GM12878 (cell line): ENCODE measurements at regions of chr5 and their contacts with region 1.

Region 1: DNA sequence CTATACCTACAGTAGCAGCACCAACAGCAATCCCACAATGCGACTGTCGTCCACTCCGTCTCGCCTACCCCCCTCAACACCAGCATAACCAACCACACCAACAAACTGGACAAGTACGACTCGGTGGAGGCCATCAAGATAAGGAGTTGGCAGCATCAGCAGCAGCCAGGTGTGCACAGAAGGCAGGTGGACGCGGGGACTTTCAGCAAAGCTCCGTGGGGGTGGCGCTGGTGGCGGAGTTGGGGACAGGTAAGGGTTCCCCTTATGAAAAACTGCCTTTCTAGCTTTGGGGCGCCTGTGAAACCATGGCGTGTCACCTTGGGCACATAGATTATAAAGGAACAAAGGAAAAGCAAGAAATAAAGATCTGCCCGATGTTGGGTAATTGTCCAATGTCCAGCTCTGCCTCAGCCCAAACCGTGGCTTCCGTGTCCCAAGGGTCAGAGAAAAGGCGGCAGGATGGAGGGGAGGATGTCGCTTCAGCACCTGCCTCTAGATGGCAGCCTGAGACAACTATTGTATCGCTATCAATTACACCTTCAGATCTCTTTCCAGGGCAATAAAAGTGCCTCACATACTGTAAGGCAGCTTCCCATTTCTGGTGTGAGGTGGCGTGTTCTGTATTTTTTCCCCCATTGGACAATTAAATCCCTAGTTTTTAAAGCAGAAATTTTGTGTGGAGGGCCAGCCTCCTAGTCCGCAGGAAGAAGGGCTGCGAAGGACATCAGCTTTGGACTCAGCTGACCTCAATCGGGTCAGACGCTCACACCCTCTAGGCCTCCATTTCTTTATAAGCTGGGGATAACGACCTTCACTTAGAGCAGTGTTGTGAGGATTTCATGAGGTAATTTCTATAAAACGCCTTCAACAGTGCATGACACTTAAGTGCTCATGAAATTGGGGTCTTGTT is 58.8 kb downstream of the MTRR start:
- DNase-seq: no peak
- ATAC-seq: peak; percentile 96
- H3K4me3 ChIP-seq: no peak overlapping the region
- H3K27ac ChIP-seq: no peak overlapping the region
- H3K4me1 ChIP-seq: no peaks in the 10 kb centered on the region
- H3K27me3 ChIP-seq: no peaks in the 10 kb centered on the region; a peak in 1 of 4 replicates
- CTCF ChIP-seq: peak; percentile 74 to 81 (median 77); a peak in 5 of 6 replicates
- EP300 ChIP-seq: no peak
- POLR2A ChIP-seq: no peak
- RAD21 ChIP-seq: peak; percentile 83

Region 2: GRCh38 chr5:7941692-7942091 is 14.0 kb after region 1 on chr5:
- CTCF ChIA-PET with region 1: interaction called, 15 read pairs
- POLR2A ChIA-PET with region 1: no interaction called
- RAD21 ChIA-PET with region 1: interaction called, 3 read pairs
- SMC1A ChIA-PET with region 1: interaction called, 4 read pairs
- in situ Hi-C with region 1: no loop called
- intact Hi-C with region 1: no loop called
- DNase-seq: no peak
- ATAC-seq: no peak
- H3K4me3 ChIP-seq: no peak overlapping the region
- H3K27ac ChIP-seq: no peak overlapping the region
- H3K4me1 ChIP-seq: no peaks in the 10 kb centered on the region
- H3K27me3 ChIP-seq: no peaks in the 10 kb centered on the region
- CTCF ChIP-seq: no peak
- EP300 ChIP-seq: no peak
- POLR2A ChIP-seq: no peak
- RAD21 ChIP-seq: no peak

Region 3: GRCh38 chr5:8184455-8185063 is 256.8 kb after region 1 on chr5:
- CTCF ChIA-PET with region 1: interaction called, 5 read pairs
- POLR2A ChIA-PET with region 1: no interaction called
- RAD21 ChIA-PET with region 1: no interaction called
- SMC1A ChIA-PET with region 1: no interaction called
- in situ Hi-C with region 1: no loop called
- intact Hi-C with region 1: loop called (anchors 5 kb)
- DNase-seq: no peak
- ATAC-seq: peak; percentile 86
- H3K4me3 ChIP-seq: no peak overlapping the region
- H3K27ac ChIP-seq: no peak overlapping the region
- H3K4me1 ChIP-seq: no peaks in the 10 kb centered on the region
- H3K27me3 ChIP-seq: no peaks in the 10 kb centered on the region
- CTCF ChIP-seq: peak; percentile 73 to 95 (median 91)
- EP300 ChIP-seq: no peak
- POLR2A ChIP-seq: no peak
- RAD21 ChIP-seq: peak; percentile 55